IMR-90 (cell line): ENCODE measurements at regions of chr1 and their contacts with region 1.

Region 1: DNA sequence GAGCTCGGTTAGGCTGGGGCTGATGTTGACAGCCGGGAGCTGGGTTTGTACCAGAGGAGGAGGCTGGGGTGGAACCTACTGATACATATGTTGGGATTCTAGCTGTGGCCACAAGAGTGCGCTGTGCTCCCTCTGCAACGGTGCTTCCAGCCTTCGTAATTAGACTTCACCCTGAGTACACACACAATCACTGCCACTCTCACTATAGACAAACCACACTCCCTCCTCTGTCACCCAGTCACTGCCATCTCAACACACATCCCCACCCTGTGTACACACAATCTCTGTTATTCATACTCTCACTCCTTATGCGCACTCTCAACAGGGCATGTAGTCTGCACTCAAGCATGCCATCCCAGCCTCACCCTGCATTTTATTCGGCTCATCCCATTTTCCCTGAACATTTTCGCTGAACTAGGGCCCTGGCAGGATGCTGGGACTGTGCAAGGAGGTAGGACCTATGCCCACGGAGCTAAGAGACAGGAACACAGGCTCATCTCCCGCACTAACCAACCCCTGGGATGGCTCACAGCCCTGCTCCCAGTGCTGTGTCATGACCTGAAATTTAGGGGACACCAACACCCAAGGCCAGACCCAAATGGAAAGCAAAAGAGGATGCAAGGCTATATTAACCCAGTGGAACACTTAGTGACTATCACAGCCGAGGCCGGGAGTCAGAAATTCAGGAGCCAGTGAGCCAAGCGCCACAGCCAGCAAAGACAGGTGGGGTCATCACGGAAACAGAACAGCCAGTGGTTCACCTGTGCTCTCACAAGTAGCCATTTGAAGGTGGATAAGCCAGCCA is 5.7 kb downstream of the GJB3 start:
- DNase-seq: peak; percentile 67
- ATAC-seq: peak; percentile 88
- H3K4me3 ChIP-seq: no peak overlapping the region
- H3K27ac ChIP-seq: no peak overlapping the region
- H3K4me1 ChIP-seq: peaks cover 2% of the 10 kb centered on the region; the same call in 1 of the 2 replicates
- H3K27me3 ChIP-seq: peaks cover 11% of the 10 kb centered on the region
- CTCF ChIP-seq: peak; percentile 95
- POLR2A ChIP-seq: no peak
- RAD21 ChIP-seq: peak; percentile 86

Region 2: GRCh38 chr1:34852677-34853217 is 66.0 kb after region 1 on chr1:
- CTCF ChIA-PET with region 1: interaction called, 5 read pairs
- POLR2A ChIA-PET with region 1: no interaction called
- dilution Hi-C with region 1: no loop called
- in situ Hi-C with region 1: no loop called
- intact Hi-C with region 1: loop called (anchors 1 kb)
- DNase-seq: peak; percentile 95
- ATAC-seq: peak; percentile 100
- H3K4me3 ChIP-seq: no peak overlapping the region
- H3K27ac ChIP-seq: no peak overlapping the region
- H3K4me1 ChIP-seq: no peaks in the 10 kb centered on the region
- H3K27me3 ChIP-seq: no peaks in the 10 kb centered on the region
- CTCF ChIP-seq: peak; percentile 99
- POLR2A ChIP-seq: no peak
- RAD21 ChIP-seq: peak; percentile 72

Region 3: DNA sequence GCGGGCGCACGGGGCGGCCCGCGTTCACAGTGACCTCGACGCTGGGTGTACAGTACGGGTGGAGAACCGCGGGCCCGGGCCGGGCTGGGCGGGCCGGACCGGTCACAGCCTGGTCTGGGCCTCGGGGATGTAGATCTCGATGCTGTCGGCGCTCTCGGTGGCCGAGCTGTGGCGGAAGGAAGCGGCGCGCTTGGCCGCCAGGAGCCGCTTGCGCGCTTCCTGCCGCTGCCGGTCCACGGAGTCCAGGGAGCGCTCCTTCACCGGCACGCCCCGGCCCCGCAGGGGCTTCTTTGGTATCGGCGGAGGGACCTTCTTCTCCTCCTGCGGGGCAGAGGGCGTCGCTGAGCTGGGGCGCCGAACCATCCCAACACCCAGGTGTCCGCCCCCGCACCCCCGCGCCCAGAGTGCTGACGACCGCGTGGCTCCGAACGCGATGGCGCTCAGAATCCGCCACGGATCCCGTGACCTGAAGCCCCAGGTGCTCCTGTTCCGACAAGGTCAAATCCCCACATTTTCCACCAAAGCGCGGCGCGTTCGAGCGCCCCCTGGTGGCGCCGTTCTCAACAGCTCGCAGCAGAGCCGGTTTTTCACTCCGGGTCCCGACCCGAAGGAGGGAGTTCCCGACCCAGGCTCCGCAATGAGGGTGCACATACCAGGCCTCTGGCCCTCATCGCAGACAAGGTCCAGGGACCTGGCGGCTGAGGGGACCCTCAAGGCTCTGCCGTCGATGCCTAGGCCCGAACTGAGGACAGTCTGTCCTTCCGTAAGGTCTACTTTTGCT is 79.4 kb after region 1 on chr1:
- CTCF ChIA-PET with region 1: interaction called, 6 read pairs
- POLR2A ChIA-PET with region 1: no interaction called
- dilution Hi-C with region 1: no loop called
- in situ Hi-C with region 1: no loop called
- intact Hi-C with region 1: loop called (anchors 1 kb)
- DNase-seq: peak; percentile 53
- ATAC-seq: peak; percentile 90
- H3K4me3 ChIP-seq: peak overlapping the region; percentile 57
- H3K27ac ChIP-seq: peak overlapping the region; percentile 8; the same call in 1 of the 2 replicates
- H3K4me1 ChIP-seq: no peaks in the 10 kb centered on the region
- H3K27me3 ChIP-seq: peaks cover 29% of the 10 kb centered on the region
- CTCF ChIP-seq: peak; percentile 82
- POLR2A ChIP-seq: no peak
- RAD21 ChIP-seq: peak; percentile 40

Region 4: DNA sequence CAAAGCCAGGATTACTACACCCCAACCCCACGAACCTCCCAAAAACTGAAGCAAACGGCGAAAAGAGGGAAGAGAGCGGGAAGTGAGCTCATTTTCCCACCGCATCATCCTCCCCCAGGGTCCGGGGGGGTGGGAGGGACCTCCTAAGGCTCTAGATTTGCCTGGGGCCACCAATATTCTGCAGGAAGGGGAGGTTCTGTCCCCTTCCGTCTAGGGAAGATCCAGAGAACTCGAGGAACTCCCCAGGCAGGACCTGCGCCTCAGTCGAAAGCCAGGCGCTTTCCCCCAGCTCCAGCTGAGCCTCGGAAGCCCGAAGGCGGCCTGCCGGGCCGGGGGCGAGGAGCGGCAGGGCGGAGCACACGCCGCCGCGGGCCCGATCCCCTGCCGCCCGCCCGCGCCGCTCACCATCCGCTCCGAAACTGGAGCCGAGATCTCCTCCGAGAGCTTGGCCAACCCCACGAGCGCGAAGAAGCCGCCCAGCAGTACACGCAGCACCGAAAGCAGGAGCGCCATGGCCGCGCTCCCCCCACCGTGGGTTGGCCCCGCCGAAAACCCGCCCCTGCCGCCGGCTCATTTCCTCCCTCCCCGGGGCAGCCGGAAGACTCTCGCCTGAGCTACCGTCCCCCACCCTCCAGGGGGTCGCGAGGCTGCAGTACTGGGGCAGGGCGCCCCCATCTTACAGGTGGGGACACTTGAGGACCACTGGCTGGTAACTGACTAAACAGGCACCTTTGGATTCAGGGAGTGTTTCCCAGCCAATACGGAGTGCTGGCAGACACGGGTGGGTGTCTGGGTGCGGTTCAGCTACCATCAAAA is 198.3 kb after region 1 on chr1 and contains the start of gene TMEM35B:
- CTCF ChIA-PET with region 1: no interaction called
- POLR2A ChIA-PET with region 1: no interaction called
- dilution Hi-C with region 1: no loop called
- in situ Hi-C with region 1: no loop called
- intact Hi-C with region 1: loop called (anchors 5 kb)
- DNase-seq: peak; percentile 41
- ATAC-seq: peak; percentile 91
- H3K4me3 ChIP-seq: peak within 1 kb of the TSS; percentile 68
- H3K27ac ChIP-seq: peak within 1 kb of the TSS; percentile 92
- H3K4me1 ChIP-seq: peaks cover 10% of the 10 kb centered on the region
- H3K27me3 ChIP-seq: no peaks in the 10 kb centered on the region
- CTCF ChIP-seq: 0 out of 2 replicates have a peak, but pooled peaks have one; percentile 4
- POLR2A ChIP-seq: peak; percentile 59
- RAD21 ChIP-seq: no peak
- total RNA-seq, gene TMEM35B: 19.7 and 20.0 TPM in 2 replicates

Region 5: GRCh38 chr1:35180776-35181374 is 394.2 kb after region 1 on chr1:
- CTCF ChIA-PET with region 1: no interaction called
- POLR2A ChIA-PET with region 1: no interaction called
- dilution Hi-C with region 1: no loop called
- in situ Hi-C with region 1: no loop called
- intact Hi-C with region 1: loop called (anchors 5 kb)
- DNase-seq: peak; percentile 44
- ATAC-seq: peak; percentile 15
- H3K4me3 ChIP-seq: no peak overlapping the region
- H3K27ac ChIP-seq: no peak overlapping the region
- H3K4me1 ChIP-seq: no peaks in the 10 kb centered on the region
- H3K27me3 ChIP-seq: no peaks in the 10 kb centered on the region
- CTCF ChIP-seq: no peak
- POLR2A ChIP-seq: no peak
- RAD21 ChIP-seq: no peak